Calu3 (cell line): ENCODE measurements at regions of chr19 and their contacts with region 1.

Region 1: DNA sequence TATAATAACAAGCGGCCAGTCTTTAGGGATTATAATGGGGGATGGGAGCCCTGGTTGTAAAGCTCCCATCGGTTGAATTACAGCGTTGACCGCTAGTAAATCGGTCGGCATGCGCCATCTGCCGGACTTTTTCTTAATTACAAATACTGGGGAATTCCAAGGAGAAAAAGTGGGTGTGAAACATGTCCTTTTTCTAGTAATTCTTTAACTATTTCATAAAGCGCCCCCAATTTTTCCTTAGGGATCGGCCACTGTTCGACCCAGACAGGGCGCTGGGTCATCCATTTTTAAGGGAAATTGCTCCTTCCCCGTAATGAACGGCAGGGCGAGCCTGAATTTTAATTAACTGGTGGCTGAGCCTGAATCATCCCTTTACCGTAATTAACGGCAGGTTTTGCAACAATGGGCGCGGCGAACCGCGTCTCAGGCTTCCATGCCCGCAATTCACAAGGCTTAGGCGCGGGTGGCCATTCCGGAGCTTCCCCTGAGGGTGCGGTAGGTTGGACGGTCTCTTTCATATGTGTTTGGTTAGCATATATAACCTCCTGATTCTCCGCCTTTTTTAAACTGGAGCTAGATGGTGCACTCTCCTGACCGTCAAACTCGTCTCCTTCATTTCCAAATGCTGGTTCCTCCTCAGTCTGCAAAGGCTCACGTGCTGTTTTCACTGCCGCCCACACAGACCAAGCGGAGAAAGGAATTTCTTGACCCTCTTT is 30.2 kb upstream of the EVI5L start:
- DNase-seq: peak; percentile 74
- H3K4me3 Mint-ChIP-seq: peak overlapping the region; percentile 19
- H3K27ac Mint-ChIP-seq: no peak overlapping the region
- H3K4me1 Mint-ChIP-seq: no peaks in the 10 kb centered on the region
- H3K27me3 Mint-ChIP-seq: peaks cover 13% of the 10 kb centered on the region
- CTCF ChIP-seq: peak; percentile 15

Region 2: DNA sequence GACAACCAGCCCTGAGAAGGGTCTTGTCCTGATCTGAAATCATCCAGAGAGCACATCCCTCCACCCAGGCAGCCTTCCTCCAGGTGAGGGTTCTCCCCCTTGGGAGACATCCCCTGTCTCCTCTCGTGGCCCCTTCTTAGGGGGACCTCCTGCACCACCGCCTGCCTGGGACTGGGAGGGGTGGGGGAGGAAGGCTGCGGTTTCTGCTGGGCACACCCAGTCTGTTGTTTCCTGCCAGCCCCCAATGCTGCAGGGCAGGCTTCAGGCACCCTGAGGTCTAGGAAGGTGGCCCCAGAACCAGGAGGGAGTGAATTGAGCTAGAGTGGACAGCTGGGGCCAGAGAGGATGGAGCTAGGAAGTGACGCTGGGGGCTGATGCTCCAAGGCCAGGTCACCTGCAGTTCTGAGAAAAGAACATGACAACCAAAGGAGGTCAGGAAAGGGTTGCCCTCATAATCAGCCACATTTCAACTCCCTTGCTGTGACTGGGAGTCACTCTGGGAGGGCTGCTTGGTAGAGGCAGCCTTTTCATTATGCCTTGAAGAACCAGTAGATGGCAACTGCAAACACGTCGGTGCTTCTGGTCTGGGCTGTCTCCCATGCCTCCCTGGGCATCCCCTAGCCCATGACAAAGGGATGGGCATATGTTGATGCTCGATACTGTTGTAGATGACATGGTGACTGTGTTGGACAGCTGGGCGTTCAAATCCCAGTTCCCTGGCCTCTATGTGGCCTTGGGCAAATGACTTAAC is 449.7 kb before region 1 on chr19:
- CTCF ChIA-PET with region 1: no interaction called
- intact Hi-C with region 1: loop called (anchors 10 kb)
- DNase-seq: no peak
- H3K4me3 Mint-ChIP-seq: no peak overlapping the region
- H3K27ac Mint-ChIP-seq: no peak overlapping the region
- H3K4me1 Mint-ChIP-seq: peaks cover 8% of the 10 kb centered on the region
- H3K27me3 Mint-ChIP-seq: peaks cover 33% of the 10 kb centered on the region
- CTCF ChIP-seq: no peak

Region 3: DNA sequence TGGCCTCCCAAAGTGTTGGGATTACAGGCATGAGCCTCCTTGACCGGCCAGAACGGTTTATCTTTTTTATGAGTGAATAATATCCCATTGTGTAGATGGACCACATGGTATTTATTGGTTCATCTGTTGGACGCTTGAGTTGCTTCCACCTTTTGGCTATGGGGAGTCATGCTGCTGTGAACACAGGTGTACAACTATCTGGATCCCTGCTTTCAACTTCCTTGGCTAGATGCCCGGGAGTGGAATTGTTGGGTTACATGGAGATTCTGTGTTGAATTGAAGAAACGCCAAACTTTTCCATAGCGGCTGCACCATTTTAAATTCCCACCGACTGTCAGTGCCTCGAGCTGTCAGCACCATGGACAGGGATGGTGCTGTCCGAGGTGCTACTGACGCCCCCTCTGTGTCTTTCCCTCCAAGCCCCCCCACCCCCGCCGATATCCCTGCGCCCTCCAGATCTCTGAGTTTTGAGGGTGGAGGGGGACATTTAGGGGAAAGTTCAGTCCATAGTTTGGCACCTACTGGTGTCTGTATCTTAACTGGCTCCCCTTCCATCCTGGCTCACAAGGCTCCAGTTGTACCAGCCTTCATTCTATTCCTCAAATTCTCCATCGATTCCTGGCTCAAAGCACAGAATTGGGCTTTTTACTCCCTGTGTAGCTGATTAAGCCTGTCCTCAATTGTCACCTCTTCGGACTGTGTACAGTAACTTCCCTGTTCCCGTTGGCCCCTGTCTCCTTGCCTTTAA is 237.0 kb before region 1 on chr19:
- CTCF ChIA-PET with region 1: interaction called, 33 read pairs
- intact Hi-C with region 1: loop called (anchors 1 kb)
- DNase-seq: no peak
- H3K4me3 Mint-ChIP-seq: no peak overlapping the region
- H3K27ac Mint-ChIP-seq: no peak overlapping the region
- H3K4me1 Mint-ChIP-seq: no peaks in the 10 kb centered on the region
- H3K27me3 Mint-ChIP-seq: no peaks in the 10 kb centered on the region
- CTCF ChIP-seq: no peak

Region 4: GRCh38 chr19:7680606-7681339 is 119.0 kb before region 1 on chr19 and contains the start of gene TRAPPC5:
- CTCF ChIA-PET with region 1: interaction called, 11 read pairs
- intact Hi-C with region 1: loop called (anchors 2 kb)
- DNase-seq: peak; percentile 81
- H3K4me3 Mint-ChIP-seq: peak within 1 kb of the TSS; percentile 85
- H3K27ac Mint-ChIP-seq: peak within 1 kb of the TSS; percentile 20
- H3K4me1 Mint-ChIP-seq: peaks cover 7% of the 10 kb centered on the region
- H3K27me3 Mint-ChIP-seq: peaks cover 51% of the 10 kb centered on the region
- CTCF ChIP-seq: peak; percentile 88
- total RNA-seq, gene TRAPPC5: 82.4 and 87.3 TPM in 2 replicates

Region 5: GRCh38 chr19:7748770-7749209 is 51.0 kb before region 1 on chr19:
- CTCF ChIA-PET with region 1: no interaction called
- intact Hi-C with region 1: loop called (anchors 5 kb)
- DNase-seq: peak; percentile 36
- H3K4me3 Mint-ChIP-seq: no peak overlapping the region
- H3K27ac Mint-ChIP-seq: no peak overlapping the region
- H3K4me1 Mint-ChIP-seq: peaks cover 8% of the 10 kb centered on the region
- H3K27me3 Mint-ChIP-seq: peaks cover 44% of the 10 kb centered on the region
- CTCF ChIP-seq: no peak